ENCODE measurements at regions of chr19 and their contacts with region 1.

Region 1: DNA sequence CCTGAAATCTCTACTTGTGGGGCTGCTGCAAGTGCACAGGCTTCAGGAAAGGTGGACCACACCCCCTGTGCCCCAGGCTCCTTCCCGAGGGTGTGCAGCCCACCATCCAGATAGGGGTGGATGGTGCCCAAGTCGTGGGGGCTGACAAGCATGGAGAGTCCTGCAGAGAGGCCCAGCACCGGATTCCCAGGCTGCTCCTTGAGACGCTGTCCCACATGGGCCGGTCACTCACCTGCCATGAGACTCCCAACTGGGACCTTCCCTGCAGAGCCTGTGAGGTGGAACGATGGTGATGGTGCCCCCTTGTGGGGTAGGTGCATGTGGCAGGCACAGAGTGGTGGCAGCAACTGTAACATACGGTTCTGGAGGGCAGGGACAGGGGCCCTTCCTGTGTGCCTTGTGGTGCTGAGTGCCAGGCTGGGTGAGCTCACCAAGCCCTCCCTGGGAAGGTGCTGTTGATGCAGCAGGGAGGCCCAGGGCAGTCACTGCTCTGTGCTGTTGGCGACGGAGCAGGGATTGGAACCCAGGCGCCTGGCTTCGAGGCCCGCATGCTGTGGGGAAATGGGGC is 33.0 kb downstream of the PPP1R37 start:
- DNase-seq: no peak
- H3K4me3 ChIP-seq: no peak overlapping the region
- H3K27me3 ChIP-seq: no peaks in the 10 kb centered on the region
- CTCF ChIP-seq: peak; percentile 84

Region 2: DNA sequence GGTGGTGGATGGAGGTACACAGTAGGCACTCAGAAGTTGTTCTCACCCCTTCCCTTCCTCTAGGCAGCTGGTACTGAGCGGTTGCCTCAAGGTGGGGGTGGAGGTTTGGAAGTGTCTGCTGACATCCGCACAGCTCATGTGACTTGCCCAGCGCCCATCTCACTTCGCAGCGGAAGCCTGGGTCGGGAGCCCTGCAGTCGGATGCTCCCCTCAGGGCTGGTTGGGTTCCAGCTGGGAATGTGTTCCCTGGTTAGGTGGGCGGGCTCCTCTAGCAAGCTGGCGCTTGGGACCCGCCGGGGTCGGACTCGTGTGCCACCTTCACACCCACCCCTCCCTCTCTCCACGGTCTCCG is 22.9 kb before region 1 on chr19:
- CTCF ChIA-PET with region 1: interaction called, 15 read pairs
- POLR2A ChIA-PET with region 1: no interaction called
- DNase-seq: no peak
- H3K4me3 ChIP-seq: peak overlapping the region; percentile 29
- H3K27me3 ChIP-seq: no peaks in the 10 kb centered on the region
- CTCF ChIP-seq: no peak

Region 3: GRCh38 chr19:45113616-45114015 is 12.4 kb before region 1 on chr19:
- CTCF ChIA-PET with region 1: interaction called, 18 read pairs
- POLR2A ChIA-PET with region 1: no interaction called
- DNase-seq: no peak
- H3K4me3 ChIP-seq: no peak overlapping the region
- H3K27me3 ChIP-seq: no peaks in the 10 kb centered on the region
- CTCF ChIP-seq: no peak

Region 4: GRCh38 chr19:45200568-45200994 is 74.6 kb after region 1 on chr19:
- CTCF ChIA-PET with region 1: no interaction called
- POLR2A ChIA-PET with region 1: no interaction called
- DNase-seq: no peak
- H3K4me3 ChIP-seq: no peak overlapping the region
- H3K27me3 ChIP-seq: no peaks in the 10 kb centered on the region
- CTCF ChIP-seq: peak; percentile 29; the same call in 1 of the 2 replicates